ENCODE measurements at regions of chr15 and their contacts with region 1.

Region 1: GRCh38 chr15:101258238-101259144 is 6.6 kb upstream of the CHSY1 start:
- DNase-seq: peak; percentile 61
- H3K27ac ChIP-seq: no peak overlapping the region
- CTCF ChIP-seq: peak; percentile 89

Region 2: DNA sequence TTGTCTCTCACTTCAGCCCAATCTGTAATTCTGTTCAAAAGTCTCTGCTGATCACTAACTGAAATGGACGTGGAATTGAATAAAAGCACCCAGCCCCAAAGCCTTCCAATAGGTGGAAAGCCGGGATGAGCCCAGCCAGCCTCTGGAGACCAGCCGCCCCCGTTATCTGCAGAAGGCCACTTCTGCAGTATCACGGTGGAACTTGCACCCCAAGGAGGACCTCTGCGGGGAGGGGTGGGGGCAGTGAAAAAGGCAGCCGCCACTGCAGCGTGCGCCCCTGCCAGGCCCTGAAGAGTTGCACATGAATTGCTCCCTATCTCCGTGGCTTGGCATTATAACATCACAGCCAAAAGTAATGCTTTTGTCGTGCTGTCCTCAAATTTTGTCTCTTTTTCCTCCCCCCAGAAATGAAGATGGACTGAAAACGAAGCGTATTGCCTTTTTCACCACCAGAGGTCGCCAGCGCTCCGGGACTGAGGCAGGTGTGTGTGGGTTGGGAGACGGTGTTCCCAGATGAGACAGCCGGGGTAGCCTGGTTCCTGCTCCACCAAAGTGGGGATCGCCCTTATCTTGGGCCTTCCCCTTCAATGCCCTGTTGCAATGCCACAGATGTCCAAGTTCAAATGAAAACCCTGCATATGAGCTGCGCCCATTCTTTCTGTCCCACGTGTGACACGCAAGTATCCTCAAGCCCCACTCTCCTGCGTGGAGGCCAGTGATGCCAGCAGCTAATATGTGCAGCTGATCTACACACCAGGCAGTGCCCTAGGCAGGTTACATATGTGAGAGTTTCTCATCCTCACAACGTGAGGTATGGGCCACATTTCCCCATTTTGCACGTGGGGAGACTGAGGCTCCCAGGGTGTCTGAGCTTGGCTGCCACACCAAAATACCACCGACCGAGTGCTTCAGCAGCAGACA is 243.3 kb before region 1 on chr15:
- CTCF ChIA-PET with region 1: interaction called, 14 read pairs
- POLR2A ChIA-PET with region 1: no interaction called
- DNase-seq: peak; percentile 84
- H3K27ac ChIP-seq: 0 out of 2 replicates have a peak overlapping the region, but pooled peaks have one; percentile 3
- CTCF ChIP-seq: peak; percentile 97

Region 3: DNA sequence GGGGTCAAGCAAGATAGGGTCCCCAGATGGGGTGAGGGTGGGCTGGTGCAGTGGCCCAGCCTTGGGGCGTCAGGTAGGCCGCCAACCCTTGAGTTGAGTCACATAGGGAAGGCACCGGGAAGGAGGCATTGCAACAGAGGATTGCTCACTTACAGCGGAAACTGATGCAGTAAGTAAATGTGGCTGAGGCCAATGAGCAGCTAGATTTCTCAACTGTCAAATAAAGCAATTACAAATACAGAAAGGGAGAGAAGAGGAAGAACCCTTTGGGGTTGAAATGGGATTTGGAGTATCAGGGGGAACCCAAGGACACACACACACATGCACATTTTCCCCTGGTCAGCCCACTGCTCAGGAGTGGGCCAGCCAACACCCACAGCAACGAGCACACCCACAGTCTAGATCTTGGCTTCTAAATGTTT is 50.6 kb before region 1 on chr15:
- CTCF ChIA-PET with region 1: no interaction called
- POLR2A ChIA-PET with region 1: no interaction called
- DNase-seq: peak; percentile 84
- H3K27ac ChIP-seq: peak overlapping the region; percentile 86
- CTCF ChIP-seq: no peak

Region 4: GRCh38 chr15:101277038-101277882 is 18.8 kb after region 1 on chr15 and contains the start of gene SELENOS:
- CTCF ChIA-PET with region 1: no interaction called
- POLR2A ChIA-PET with region 1: no interaction called
- DNase-seq: peak; percentile 89
- H3K27ac ChIP-seq: peak within 1 kb of the TSS; percentile 88
- CTCF ChIP-seq: no peak

Measured in RWPE1 (cell line).